Transverse colon (tissue), 4 donors: ENCODE measurements at regions of chr6 and their contacts with region 1.

Region 1: GRCh38 chr6:167350731-167351655 is 26.1 kb downstream of the TTLL2 start:
- DNase-seq: peak; percentile 87
- H3K4me3 ChIP-seq: peak overlapping the region; percentile 8 to 54 (median 36)
- H3K27ac ChIP-seq: peak overlapping the region; percentile 48 to 71 (median 62)
- H3K4me1 ChIP-seq: peaks cover 0 to 18% (median 9%) of the 10 kb centered on the region in 4 donors
- H3K27me3 ChIP-seq: no peaks in the 10 kb centered on the region
- CTCF ChIP-seq: peak; percentile 74 to 85 (median 77)
- EP300 ChIP-seq: no peak
- POLR2A ChIP-seq: peak; percentile 32

Region 2: DNA sequence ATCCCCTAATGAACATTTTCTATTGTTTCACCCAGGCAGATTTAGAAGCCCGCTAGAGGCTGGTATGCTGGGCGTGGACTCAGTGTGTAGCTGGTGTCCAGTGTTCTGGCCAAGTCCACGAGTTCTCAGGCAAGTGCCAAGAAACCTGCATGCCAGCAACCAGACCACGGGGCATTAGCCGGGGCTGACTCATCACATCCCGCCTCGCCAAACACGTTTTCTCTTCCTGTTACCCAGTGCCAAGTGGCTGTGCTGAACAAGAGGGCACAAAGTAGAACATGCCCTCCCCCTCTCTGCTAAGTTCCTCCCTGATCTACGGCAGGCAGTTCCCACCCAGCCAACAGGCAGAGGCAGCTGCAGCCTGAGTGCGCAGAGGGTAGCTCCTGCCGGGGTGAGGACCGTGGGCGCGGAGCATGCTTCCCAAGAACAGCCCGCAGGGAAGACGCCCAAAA is 794.1 kb before region 1 on chr6:
- in situ Hi-C with region 1: no loop called
- intact Hi-C with region 1: no loop called
- DNase-seq: peak; percentile 75
- H3K4me3 ChIP-seq: no peak overlapping the region
- H3K27ac ChIP-seq: peak overlapping the region; percentile 44 to 68 (median 63)
- H3K4me1 ChIP-seq: peaks cover 0 to 21% (median 9%) of the 10 kb centered on the region in 4 donors
- H3K27me3 ChIP-seq: no peaks in the 10 kb centered on the region
- CTCF ChIP-seq: no peak
- EP300 ChIP-seq: no peak
- POLR2A ChIP-seq: no peak

Region 3: DNA sequence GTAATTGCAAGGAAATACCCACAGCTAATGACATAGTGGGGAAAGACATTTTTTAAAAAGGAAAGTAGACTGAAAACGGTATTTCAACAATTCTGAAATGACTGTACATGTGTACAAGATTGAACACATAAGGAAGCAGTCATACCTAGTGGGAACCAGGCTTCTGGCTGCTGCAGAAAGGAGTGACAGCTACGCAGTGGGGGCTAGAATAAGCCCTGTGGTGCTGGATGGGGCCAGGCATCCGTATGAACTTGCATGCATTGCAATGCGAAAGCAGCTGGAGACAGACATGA is 138.3 kb before region 1 on chr6:
- in situ Hi-C with region 1: loop called in 2 of 4 experiments (anchors 25 kb)
- intact Hi-C with region 1: no loop called
- DNase-seq: no peak
- H3K4me3 ChIP-seq: no peak overlapping the region
- H3K27ac ChIP-seq: no peak overlapping the region
- H3K4me1 ChIP-seq: peaks cover 0 to 3% (median 0%) of the 10 kb centered on the region in 4 donors
- H3K27me3 ChIP-seq: no peaks in the 10 kb centered on the region
- CTCF ChIP-seq: no peak
- EP300 ChIP-seq: no peak
- POLR2A ChIP-seq: no peak